ENCODE measurements at regions of chr2 and their contacts with region 1.

Region 1: GRCh38 chr2:27409321-27410073 is at the start of gene PPM1G:
- DNase-seq: peak; percentile 91 to 98 (median 97)
- ATAC-seq: peak; percentile 96
- H3K4me3 ChIP-seq: peak within 1 kb of the TSS; percentile 51 to 98
- H3K4me3 Mint-ChIP-seq: peak within 1 kb of the TSS; percentile 88
- H3K27ac ChIP-seq: peak within 1 kb of the TSS; percentile 84 to 90
- H3K27ac Mint-ChIP-seq: peak within 1 kb of the TSS; percentile 97
- H3K4me1 ChIP-seq: peaks cover 21% of the 10 kb centered on the region
- H3K4me1 Mint-ChIP-seq: peaks cover 39% of the 10 kb centered on the region
- H3K27me3 ChIP-seq: no peaks in the 10 kb centered on the region
- H3K27me3 Mint-ChIP-seq: no peaks in the 10 kb centered on the region
- CTCF ChIP-seq: no peak
- total RNA-seq, gene PPM1G: 36.4 to 38.5 TPM

Region 2: DNA sequence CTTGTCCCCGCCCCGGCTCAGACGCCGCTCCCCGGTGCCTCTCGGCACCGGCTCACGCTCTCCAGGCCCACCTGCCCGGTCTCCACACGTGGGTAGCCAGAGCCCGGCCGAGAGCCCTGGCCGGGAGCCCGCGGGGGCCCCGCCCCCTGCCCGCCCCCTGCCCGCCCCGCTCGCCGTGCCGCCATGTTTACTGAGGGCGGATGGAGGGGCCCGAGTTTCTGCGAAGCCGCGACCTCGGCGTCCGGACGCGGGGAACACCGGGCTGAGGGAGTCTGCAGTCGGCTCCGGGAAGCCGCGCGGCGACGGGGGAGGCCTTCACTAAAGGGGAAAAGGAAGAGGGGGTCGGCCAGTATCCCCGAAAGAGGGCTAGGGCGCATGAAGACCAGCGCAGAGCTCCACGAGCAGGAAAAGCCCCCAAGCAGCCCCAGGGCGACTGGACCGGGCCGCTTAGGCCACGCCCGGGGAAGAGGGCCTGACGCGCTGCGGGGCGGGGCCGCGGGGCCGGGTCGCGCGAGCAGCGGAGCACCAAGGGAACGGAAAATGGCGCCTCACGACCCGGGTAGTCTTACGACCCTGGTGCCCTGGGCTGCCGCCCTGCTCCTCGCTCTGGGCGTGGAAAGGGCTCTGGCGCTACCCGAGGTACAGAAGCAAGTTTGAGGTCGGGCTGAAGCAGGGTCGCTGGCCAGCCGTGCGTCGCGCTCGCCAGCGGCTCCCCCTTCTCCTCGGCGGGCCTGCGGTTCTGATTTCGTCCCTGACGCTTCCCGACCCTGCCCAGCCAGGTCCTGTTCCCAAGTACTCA is 197.5 kb before region 1 on chr2 and contains the starts of genes ATRAID and SLC5A6:
- CTCF ChIA-PET with region 1: no interaction called
- POLR2A ChIA-PET with region 1: no interaction called
- intact Hi-C with region 1: no loop called
- DNase-seq: peak; percentile 78 to 94 (median 87)
- ATAC-seq: peak; percentile 84
- H3K4me3 ChIP-seq: peak within 1 kb of the TSS; percentile 67 to 99
- H3K4me3 Mint-ChIP-seq: peak within 1 kb of the TSS; percentile 100
- H3K27ac ChIP-seq: peak within 1 kb of the TSS; percentile 97 to 100
- H3K27ac Mint-ChIP-seq: peak within 1 kb of the TSS; percentile 100
- H3K4me1 ChIP-seq: peaks cover 26% of the 10 kb centered on the region
- H3K4me1 Mint-ChIP-seq: peaks cover 44% of the 10 kb centered on the region
- H3K27me3 ChIP-seq: no peaks in the 10 kb centered on the region
- H3K27me3 Mint-ChIP-seq: no peaks in the 10 kb centered on the region
- CTCF ChIP-seq: no peak
- total RNA-seq, gene ATRAID: 70.0 to 71.7 TPM
- total RNA-seq, gene SLC5A6: 410 to 431 TPM

Region 3: DNA sequence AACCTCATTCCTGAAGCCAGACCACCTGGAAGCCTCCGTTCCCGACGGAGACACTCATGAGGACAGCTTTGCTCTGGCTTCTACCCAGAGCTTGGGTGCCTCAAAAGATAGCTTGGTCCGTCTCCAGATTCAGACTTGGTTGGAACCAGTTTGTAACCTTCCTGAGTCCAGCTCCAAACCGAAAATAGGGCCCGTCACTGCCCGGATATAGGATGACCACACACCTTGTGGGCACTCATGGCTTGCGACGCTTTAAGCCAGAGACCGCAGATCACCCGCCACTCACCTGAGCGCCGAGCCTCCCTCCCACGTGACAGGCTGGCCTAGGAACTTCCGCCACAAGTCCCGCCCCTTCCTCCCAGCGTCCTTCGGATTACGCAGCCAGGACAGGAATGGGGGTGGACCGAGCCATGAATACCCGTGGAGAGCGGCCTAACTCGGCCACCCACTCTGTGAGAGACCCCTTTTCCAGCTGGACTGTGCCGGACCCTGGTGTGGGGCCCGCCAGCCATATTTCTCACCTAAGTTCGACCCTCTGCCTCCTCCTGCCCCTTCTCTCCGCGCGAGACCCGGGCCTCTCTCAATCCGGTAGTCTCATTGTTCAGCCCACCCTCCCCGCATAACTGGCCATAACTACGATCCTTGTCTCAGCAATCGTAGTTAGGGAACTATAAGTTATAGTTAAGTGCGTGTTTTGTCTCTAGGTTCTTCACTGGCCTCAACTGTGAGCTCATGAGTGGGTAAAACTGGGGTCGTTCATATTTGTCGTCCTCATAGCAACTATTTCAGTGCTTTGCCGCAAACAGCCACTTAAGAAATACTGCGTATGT is 86.5 kb before region 1 on chr2 and contains the start of gene MPV17:
- CTCF ChIA-PET with region 1: no interaction called
- POLR2A ChIA-PET with region 1: interaction called, 4 read pairs
- intact Hi-C with region 1: loop called (anchors 1 to 2 kb)
- DNase-seq: peak; percentile 65 to 93 (median 87)
- ATAC-seq: peak; percentile 96
- H3K4me3 ChIP-seq: peak within 1 kb of the TSS; percentile 80 to 81
- H3K4me3 Mint-ChIP-seq: peak within 1 kb of the TSS; percentile 99
- H3K27ac ChIP-seq: peak within 1 kb of the TSS; percentile 89 to 94
- H3K27ac Mint-ChIP-seq: peak within 1 kb of the TSS; percentile 99
- H3K4me1 ChIP-seq: peaks cover 9% of the 10 kb centered on the region
- H3K4me1 Mint-ChIP-seq: peaks cover 25% of the 10 kb centered on the region
- H3K27me3 ChIP-seq: no peaks in the 10 kb centered on the region
- H3K27me3 Mint-ChIP-seq: no peaks in the 10 kb centered on the region
- CTCF ChIP-seq: no peak
- total RNA-seq, gene MPV17: 23.6 to 26.0 TPM

Region 4: DNA sequence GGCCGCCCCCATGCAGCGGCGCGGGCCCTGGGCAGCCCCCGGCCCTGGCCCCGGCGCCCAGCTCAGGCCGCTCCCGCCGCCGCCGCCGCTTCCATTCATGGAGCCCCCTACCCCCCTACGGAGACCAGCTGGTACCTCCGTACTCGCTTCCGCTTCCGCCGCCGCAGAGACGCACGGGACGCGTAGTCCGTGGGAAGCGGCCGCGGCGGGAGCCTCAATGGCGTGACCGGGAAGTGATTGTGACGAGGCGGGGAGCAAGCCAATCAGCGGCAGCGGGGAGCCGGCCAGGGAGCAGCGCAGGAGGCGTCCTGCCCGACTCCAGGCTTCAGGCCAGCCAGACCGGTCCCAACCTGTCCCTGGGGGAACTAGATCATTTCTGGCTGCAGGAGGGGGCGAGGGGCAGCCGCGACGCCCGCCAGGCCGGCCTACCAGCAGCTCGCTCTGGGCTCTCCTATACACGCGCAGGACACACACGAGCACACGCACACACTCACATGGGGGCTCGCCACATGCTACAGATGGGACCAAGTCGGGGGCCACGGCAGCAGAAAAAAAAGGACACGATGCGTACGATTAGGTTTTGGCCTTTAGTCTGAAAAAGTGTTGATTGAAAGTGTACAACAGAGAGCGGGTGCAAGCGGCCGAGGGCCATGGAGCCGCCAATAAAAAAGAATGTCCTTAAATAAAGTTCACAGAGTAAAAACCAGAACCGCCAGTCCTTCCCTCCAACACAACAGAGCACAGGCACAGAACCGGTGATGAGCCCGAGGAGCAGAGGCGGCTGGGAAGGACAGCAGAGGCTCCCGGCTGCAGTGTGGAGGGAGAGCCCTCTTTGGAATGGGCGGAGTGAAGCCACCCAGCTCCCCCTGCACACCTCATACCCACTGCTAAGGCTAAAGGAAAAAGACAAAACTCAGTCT is 28.6 kb before region 1 on chr2 and contains the start of gene ZNF513:
- CTCF ChIA-PET with region 1: no interaction called
- POLR2A ChIA-PET with region 1: interaction called, 12 read pairs
- intact Hi-C with region 1: loop called (anchors 1 kb)
- DNase-seq: peak; percentile 70 to 94 (median 89)
- ATAC-seq: peak; percentile 89
- H3K4me3 ChIP-seq: peak within 1 kb of the TSS; percentile 65 to 72
- H3K4me3 Mint-ChIP-seq: peak within 1 kb of the TSS; percentile 87
- H3K27ac ChIP-seq: peak within 1 kb of the TSS; percentile 66 to 94
- H3K27ac Mint-ChIP-seq: peak within 1 kb of the TSS; percentile 94
- H3K4me1 ChIP-seq: peaks cover 17% of the 10 kb centered on the region
- H3K4me1 Mint-ChIP-seq: peaks cover 22% of the 10 kb centered on the region
- H3K27me3 ChIP-seq: no peaks in the 10 kb centered on the region
- H3K27me3 Mint-ChIP-seq: no peaks in the 10 kb centered on the region
- CTCF ChIP-seq: no peak
- total RNA-seq, gene ZNF513: 19.0 to 21.6 TPM

Measured in CD8-positive, alpha-beta T cell (primary cell).